CD4-positive, alpha-beta memory T cell (primary cell): ENCODE measurements at regions of chr11 and their contacts with region 1.

Region 1: GRCh38 chr11:65662799-65663638 is at the start of gene RELA:
- DNase-seq: peak; percentile 87 to 95 (median 91)
- H3K4me3 ChIP-seq: peak within 1 kb of the TSS; percentile 96 to 97
- H3K4me3 Mint-ChIP-seq: peak within 1 kb of the TSS; percentile 89 to 95 (median 90)
- H3K27ac ChIP-seq: peak within 1 kb of the TSS; percentile 98
- H3K27ac Mint-ChIP-seq: peak within 1 kb of the TSS; percentile 96 to 98 (median 96)
- H3K4me1 ChIP-seq: peaks cover 38% of the 10 kb centered on the region
- H3K4me1 Mint-ChIP-seq: peaks cover 20 to 45% (median 33%) of the 10 kb centered on the region in 4 donors
- H3K27me3 ChIP-seq: no peaks in the 10 kb centered on the region
- H3K27me3 Mint-ChIP-seq: no peaks in the 10 kb centered on the region
- total RNA-seq, gene RELA: 170 to 173 TPM

Region 2: GRCh38 chr11:65652511-65653231 is 10.3 kb before region 1 on chr11:
- CTCF ChIA-PET with region 1: interaction called, 9 read pairs
- POLR2A ChIA-PET with region 1: interaction called, 183 read pairs
- intact Hi-C with region 1: loop called (anchors 1 kb)
- DNase-seq: peak; percentile 95 to 99 (median 97)
- H3K4me3 ChIP-seq: peak overlapping the region; percentile 50 to 64
- H3K4me3 Mint-ChIP-seq: peak overlapping the region; percentile 88 to 95 (median 91)
- H3K27ac ChIP-seq: peak overlapping the region; percentile 91
- H3K27ac Mint-ChIP-seq: peak overlapping the region; percentile 96 to 99 (median 98)
- H3K4me1 ChIP-seq: peaks cover 35% of the 10 kb centered on the region
- H3K4me1 Mint-ChIP-seq: peaks cover 34 to 59% (median 48%) of the 10 kb centered on the region in 4 donors
- H3K27me3 ChIP-seq: no peaks in the 10 kb centered on the region
- H3K27me3 Mint-ChIP-seq: no peaks in the 10 kb centered on the region